ENCODE measurements at regions of chr17 and their contacts with region 1.

Region 1: DNA sequence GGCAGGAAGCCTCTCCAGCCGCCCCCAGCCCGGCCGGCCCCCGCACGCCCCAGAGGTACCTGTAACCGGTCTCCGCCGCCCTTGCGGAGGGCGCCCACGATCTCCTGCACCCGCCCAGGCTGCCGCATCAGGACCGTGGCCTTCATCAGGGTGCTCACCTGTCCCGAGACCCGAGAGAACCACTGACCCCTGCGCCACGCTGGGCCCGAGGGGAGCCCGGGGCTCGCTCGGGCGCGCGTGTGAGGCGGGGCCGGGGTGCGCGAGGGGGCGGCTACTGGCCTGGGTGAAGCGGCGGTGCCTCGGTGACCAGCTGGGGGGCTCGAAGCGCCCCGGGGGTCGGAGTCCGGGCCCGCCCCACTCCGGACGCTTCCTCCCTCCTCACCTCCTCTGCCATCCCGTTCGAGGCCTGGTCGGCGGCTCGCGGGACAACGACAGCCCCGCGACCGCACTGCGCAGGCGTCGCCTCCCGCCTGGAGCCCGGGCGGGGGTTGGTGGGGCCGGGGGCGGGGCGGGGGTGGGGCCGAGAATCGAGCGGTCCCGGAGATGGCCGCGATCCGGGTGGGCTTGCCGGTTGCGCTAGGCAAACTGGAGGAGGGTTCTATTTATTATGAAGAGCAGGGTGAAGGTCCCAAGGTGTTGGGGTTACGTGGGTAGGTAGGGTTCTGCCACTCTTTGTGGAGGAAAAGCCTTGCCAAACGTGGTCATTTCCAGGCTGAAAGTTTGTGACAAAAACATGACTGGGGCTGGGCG is at the start of gene NT5C3B:
- DNase-seq: peak; percentile 72
- ATAC-seq: peak; percentile 86
- H3K4me3 ChIP-seq: peak within 1 kb of the TSS; percentile 21 to 80 (median 67)
- H3K4me3 Mint-ChIP-seq: peak within 1 kb of the TSS; percentile 92
- H3K27ac ChIP-seq: peak within 1 kb of the TSS in 1 of 2 donors; percentile 62
- H3K27ac Mint-ChIP-seq: peak within 1 kb of the TSS; percentile 85
- H3K4me1 ChIP-seq: peaks cover 12 to 14% of the 10 kb centered on the region in 2 donors
- H3K4me1 Mint-ChIP-seq: peaks cover 13% of the 10 kb centered on the region
- H3K27me3 ChIP-seq: peaks cover 0 to 13% (median 0%) of the 10 kb centered on the region in 4 experiments
- H3K27me3 Mint-ChIP-seq: no peaks in the 10 kb centered on the region
- CTCF ChIP-seq: no peak
- total RNA-seq, gene NT5C3B: 46.5 and 49.6 TPM in 2 replicates

Region 2: DNA sequence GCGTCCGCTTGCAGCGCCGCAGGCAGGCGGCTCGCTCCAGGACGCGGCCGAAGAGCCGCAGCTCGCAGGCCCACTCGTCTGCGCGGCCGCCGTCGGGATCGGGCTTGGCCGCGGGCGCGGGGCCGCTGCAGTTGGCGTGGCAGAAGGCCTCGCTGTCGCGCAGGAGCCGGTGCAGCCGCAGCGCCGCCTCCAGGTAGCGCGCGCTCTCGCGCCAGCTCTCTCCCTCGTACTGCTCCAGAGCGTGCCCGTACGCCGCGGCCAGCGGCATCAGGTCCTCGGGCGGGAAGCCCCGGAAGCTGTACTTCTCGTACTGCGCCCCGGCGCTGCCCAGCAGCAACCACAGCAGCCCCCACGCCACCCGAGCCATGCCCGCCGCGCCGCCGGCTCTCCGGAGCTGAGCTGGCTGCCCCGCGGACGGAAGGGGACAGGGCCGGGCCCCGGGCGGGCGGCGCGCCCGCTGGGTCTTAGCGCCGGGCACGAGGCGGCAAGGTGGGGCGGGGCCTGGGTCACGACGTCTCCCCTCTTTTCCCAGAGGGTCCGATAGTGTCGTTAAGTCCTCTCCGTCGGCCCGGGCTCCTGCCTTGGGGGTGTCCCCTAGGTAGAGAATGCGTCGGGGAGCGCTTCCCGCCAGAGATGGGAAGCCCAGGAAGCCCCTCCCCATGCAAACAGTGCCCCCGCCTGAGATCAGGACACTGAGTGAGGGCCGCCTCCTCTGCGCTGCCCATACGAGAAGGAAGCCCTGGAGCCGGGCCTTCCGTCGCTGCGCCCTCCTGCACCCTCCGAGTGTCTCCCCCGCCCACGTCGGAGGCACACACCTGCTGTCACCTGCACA is 24.2 kb before region 1 on chr17 and contains the start of gene P3H4:
- CTCF ChIA-PET with region 1: interaction called, 5 read pairs
- POLR2A ChIA-PET with region 1: no interaction called
- intact Hi-C with region 1: loop called (anchors 1 kb)
- DNase-seq: peak; percentile 88
- ATAC-seq: peak; percentile 91
- H3K4me3 ChIP-seq: peak within 1 kb of the TSS; percentile 23 to 85 (median 60)
- H3K4me3 Mint-ChIP-seq: peak within 1 kb of the TSS; percentile 96
- H3K27ac ChIP-seq: no peak within 1 kb of the TSS
- H3K27ac Mint-ChIP-seq: peak within 1 kb of the TSS; percentile 83
- H3K4me1 ChIP-seq: peaks cover 20% of the 10 kb centered on the region in 2 donors
- H3K4me1 Mint-ChIP-seq: peaks cover 19% of the 10 kb centered on the region
- H3K27me3 ChIP-seq: peaks cover 0 to 25% (median 5%) of the 10 kb centered on the region in 4 experiments
- H3K27me3 Mint-ChIP-seq: peaks cover 6% of the 10 kb centered on the region
- CTCF ChIP-seq: peak; percentile 82
- total RNA-seq, gene P3H4: 2.5 and 2.8 TPM in 2 replicates

Measured in B cell (primary cell).